Activated CD4-positive, alpha-beta T cell treated with anti-CD3 and anti-CD28 coated beads for 36 hours (primary cell): ENCODE measurements at regions of chr2 and their contacts with region 1.

Region 1: DNA sequence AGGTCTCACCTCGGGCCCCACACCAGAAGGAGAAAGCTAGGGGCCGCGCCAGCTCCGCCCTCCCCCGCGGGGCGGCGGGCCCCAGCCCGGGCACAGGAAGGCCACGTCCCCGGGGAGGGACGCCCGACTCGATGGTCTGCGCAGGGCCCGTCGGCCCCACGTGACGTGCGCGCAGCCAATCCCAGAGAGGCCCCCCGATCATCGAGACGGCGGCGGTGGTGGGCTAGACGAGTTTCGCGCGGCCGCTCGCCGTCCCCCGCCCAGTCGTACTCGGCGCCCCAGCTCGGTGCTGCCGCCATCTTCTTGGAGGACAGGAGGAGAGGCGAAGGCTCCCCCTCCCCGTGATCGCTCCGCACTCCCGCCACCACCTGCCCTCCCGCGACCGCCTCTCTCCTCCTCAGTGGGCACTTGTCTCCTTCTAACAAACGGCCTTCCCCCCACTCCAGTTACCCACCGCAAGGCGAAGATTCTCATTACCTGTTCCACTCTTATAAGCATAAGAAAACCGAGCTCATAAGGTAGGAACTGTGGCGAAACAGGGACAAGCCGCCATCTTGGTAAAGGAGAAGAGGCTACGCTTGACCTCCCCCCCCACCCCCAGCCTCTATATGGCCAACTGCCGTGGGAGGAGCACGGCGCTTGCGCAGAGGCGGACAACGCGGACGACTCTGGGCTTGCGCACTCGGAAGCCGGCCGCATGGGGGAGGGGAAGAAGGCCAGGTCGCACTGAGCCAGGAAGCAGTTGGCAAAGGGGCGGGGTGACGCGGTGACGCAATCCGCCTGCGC is at the start of gene HDLBP:
- DNase-seq: peak; percentile 100
- ATAC-seq: peak; percentile 84
- H3K4me3 Mint-ChIP-seq: peak within 1 kb of the TSS; percentile 100
- H3K27ac Mint-ChIP-seq: peak within 1 kb of the TSS; percentile 100
- H3K4me1 Mint-ChIP-seq: peaks cover 70% of the 10 kb centered on the region
- H3K27me3 Mint-ChIP-seq: no peaks in the 10 kb centered on the region
- total RNA-seq, gene HDLBP: 259 to 348 TPM

Region 2: DNA sequence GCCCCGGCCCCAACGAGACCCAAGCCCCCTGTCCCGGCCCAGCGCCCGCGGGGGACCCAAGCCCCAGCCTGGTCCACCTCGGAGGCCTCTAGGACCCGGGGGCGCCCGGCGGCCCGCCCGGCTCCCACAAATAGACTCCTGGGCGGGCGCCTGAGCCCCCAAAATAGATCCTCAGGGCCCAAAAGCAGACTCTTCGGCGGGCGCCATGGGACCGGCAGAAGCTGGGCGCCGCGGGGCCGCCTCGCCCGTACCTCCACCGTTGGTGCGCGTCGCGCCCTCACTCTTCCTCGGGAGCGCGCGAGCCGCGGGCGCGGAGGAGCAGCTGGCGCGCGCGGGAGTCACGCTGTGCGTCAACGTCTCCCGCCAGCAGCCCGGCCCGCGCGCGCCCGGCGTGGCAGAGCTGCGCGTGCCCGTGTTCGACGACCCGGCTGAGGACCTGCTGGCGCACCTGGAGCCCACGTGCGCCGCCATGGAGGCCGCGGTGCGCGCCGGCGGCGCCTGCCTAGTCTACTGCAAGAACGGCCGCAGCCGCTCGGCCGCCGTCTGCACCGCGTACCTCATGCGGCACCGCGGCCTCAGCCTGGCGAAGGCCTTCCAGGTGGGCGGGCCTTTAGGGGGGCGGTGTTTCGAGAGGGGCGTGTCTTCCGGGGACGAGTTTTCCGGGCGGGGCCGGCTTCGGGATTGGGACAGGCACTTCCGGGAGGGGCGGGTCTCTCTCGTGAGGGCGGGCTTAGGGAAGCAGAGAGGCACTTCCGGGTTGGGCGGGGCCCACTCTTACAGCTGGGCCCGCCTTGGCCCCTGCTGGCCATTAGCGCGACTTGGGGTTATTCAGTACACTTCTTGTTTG is 754.6 kb before region 1 on chr2:
- CTCF ChIA-PET with region 1: no interaction called
- POLR2A ChIA-PET with region 1: no interaction called
- intact Hi-C with region 1: loop called (anchors 1 to 5 kb)
- DNase-seq: peak; percentile 100
- ATAC-seq: peak; percentile 60
- H3K4me3 Mint-ChIP-seq: peak overlapping the region; percentile 82
- H3K27ac Mint-ChIP-seq: peak overlapping the region; percentile 89
- H3K4me1 Mint-ChIP-seq: peaks cover 76% of the 10 kb centered on the region
- H3K27me3 Mint-ChIP-seq: no peaks in the 10 kb centered on the region

Region 3: GRCh38 chr2:240655931-240656886 is 659.1 kb before region 1 on chr2:
- CTCF ChIA-PET with region 1: no interaction called
- POLR2A ChIA-PET with region 1: no interaction called
- intact Hi-C with region 1: no loop called
- DNase-seq: no peak
- ATAC-seq: peak; percentile 47
- H3K4me3 Mint-ChIP-seq: no peak overlapping the region
- H3K27ac Mint-ChIP-seq: no peak overlapping the region
- H3K4me1 Mint-ChIP-seq: peaks cover 6% of the 10 kb centered on the region
- H3K27me3 Mint-ChIP-seq: peaks cover 28% of the 10 kb centered on the region

Region 4: GRCh38 chr2:240868286-240869108 is 446.8 kb before region 1 on chr2 and contains the start of gene AGXT:
- CTCF ChIA-PET with region 1: no interaction called
- POLR2A ChIA-PET with region 1: no interaction called
- intact Hi-C with region 1: no loop called
- DNase-seq: no peak
- ATAC-seq: no peak
- H3K4me3 Mint-ChIP-seq: no peak within 1 kb of the TSS
- H3K27ac Mint-ChIP-seq: no peak within 1 kb of the TSS
- H3K4me1 Mint-ChIP-seq: no peaks in the 10 kb centered on the region
- H3K27me3 Mint-ChIP-seq: no peaks in the 10 kb centered on the region
- total RNA-seq, gene AGXT: not detected

Region 5: DNA sequence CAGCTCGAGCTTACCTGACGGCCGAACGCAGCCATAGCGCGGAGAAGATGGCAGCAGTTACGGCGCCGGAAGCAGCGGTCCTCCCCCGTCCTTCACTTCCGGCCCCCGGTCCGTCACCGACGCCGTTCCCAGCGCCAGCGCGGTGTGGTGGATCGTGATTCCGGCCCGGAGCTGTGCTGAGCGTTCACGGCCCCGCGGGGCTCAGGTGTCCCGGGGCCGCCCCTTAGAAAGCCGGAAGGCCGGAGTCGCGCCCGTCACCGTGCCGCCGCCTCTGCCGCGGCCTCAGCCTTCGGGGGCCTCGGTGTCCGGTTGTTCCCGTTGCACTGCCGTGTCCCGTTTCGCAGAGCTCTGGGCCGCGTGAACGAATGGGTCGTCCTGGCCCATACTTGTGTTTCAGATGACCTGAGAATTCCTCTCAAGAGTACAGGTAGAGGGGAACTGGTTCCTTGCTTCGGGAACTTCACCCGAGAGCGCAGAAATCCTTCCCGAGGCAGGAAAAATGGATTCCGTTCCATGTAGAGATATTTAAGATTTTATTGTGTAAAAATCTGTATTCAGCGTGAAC is 213.0 kb before region 1 on chr2 and contains the start of gene MTERF4:
- CTCF ChIA-PET with region 1: no interaction called
- POLR2A ChIA-PET with region 1: no interaction called
- intact Hi-C with region 1: loop called (anchors 1 to 10 kb)
- DNase-seq: peak; percentile 94
- ATAC-seq: peak; percentile 97
- H3K4me3 Mint-ChIP-seq: peak within 1 kb of the TSS; percentile 98
- H3K27ac Mint-ChIP-seq: peak within 1 kb of the TSS; percentile 99
- H3K4me1 Mint-ChIP-seq: peaks cover 48% of the 10 kb centered on the region
- H3K27me3 Mint-ChIP-seq: no peaks in the 10 kb centered on the region
- total RNA-seq, gene MTERF4: 34.4 to 34.5 TPM

Region 6: GRCh38 chr2:241302083-241302482 is 13.2 kb before region 1 on chr2:
- CTCF ChIA-PET with region 1: interaction called, 6 read pairs
- POLR2A ChIA-PET with region 1: interaction called, 10 read pairs
- intact Hi-C with region 1: no loop called
- DNase-seq: no peak
- ATAC-seq: no peak
- H3K4me3 Mint-ChIP-seq: no peak overlapping the region
- H3K27ac Mint-ChIP-seq: no peak overlapping the region
- H3K4me1 Mint-ChIP-seq: peaks cover 45% of the 10 kb centered on the region
- H3K27me3 Mint-ChIP-seq: no peaks in the 10 kb centered on the region

Region 7: DNA sequence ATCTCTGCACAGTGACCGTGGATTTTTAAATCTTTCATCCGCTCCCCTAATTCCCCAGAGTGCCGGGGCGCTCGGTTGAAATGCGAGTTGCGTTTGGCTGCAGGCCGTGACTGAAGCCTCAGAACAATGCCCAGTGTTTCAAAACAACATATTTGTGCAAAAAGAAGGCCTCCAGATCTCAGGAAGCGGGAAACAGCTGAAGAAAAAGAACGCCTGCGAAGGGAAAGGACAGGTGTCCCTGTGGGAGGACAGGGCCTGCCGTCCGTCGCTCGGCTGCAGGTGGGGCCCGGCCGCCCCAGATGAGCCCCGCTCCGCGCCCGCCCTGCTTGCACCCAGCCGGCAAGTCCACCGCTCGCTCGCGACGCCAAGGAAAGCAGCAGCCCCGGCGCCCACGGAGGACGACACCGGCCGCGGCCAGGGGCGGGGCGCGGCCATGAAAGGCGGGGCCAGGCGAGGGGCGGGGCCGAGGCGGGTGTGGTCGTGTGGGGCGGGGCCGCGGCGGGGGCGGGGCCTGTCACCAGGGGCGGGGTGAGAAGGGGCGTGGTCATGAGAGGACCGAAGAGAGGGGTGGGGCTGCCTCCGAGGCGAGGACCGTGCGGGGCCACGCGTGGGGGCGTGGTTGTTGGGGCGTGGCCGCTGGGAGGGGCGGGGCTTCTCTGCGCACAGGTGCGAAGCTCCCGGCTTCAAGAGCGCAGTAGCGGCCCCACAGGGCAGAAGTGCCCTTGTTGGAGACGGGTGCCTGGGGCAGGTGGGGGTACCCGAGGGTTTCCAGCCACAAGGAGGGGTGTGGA is 225.7 kb after region 1 on chr2:
- CTCF ChIA-PET with region 1: no interaction called
- POLR2A ChIA-PET with region 1: no interaction called
- intact Hi-C with region 1: loop called in 1 of 2 experiments (anchors 1 kb)
- DNase-seq: peak; percentile 90
- ATAC-seq: peak; percentile 92
- H3K4me3 Mint-ChIP-seq: peak overlapping the region; percentile 31
- H3K27ac Mint-ChIP-seq: no peak overlapping the region
- H3K4me1 Mint-ChIP-seq: peaks cover 4% of the 10 kb centered on the region
- H3K27me3 Mint-ChIP-seq: peaks cover 14% of the 10 kb centered on the region

Region 8: DNA sequence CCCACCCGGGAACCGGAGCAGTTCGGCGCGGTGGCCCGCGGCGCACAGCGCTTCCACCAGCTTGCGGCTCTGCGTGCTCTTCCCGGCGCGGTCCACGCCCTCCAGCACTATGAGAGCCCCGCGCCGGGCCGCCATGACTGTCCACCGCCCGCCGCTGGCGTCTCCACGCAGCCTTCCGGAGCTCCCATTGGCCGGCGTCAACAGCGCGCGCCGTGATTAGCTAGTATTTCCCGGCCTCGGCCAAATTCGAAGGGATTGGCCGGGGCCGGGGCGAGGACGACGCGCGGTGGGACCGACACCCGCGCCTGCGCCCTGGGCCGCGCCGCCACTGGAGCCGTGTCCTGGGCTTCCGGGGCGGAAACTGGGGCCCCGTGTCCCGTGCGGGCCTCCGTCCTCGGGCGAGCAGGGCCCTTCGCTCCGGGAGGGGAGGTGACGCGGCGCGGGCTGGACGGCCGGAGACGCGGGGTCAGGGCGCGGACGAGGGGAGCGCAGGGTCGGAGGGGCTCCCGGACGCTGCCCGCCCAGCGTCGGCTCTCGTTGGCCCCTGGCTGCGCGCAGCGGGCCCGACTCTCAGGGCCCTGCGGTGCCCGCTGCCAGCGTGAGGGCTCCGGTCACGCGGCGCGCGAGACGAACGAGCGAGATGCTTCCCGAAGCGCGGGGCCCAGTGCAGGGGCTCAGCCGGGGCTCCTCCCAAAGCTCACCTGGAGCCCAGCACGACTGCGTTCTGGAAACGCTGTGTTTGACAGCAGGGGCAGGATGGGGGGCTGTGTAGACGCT is 371.6 kb after region 1 on chr2 and contains the start of gene DTYMK:
- CTCF ChIA-PET with region 1: interaction called, 3 read pairs
- POLR2A ChIA-PET with region 1: interaction called, 5 read pairs
- intact Hi-C with region 1: loop called (anchors 1 to 10 kb)
- DNase-seq: peak; percentile 98
- ATAC-seq: peak; percentile 96
- H3K4me3 Mint-ChIP-seq: peak within 1 kb of the TSS; percentile 98
- H3K27ac Mint-ChIP-seq: peak within 1 kb of the TSS; percentile 96
- H3K4me1 Mint-ChIP-seq: peaks cover 32% of the 10 kb centered on the region
- H3K27me3 Mint-ChIP-seq: no peaks in the 10 kb centered on the region
- total RNA-seq, gene DTYMK: 79.8 to 93.1 TPM

Region 9: GRCh38 chr2:242088471-242089212 is 773.4 kb after region 1 on chr2:
- CTCF ChIA-PET with region 1: no interaction called
- POLR2A ChIA-PET with region 1: no interaction called
- intact Hi-C with region 1: loop called in 1 of 2 experiments (anchors 5 kb)
- DNase-seq: peak; percentile 95
- ATAC-seq: peak; percentile 96
- H3K4me3 Mint-ChIP-seq: peak overlapping the region; percentile 82
- H3K27ac Mint-ChIP-seq: peak overlapping the region; percentile 55
- H3K4me1 Mint-ChIP-seq: peaks cover 37% of the 10 kb centered on the region
- H3K27me3 Mint-ChIP-seq: peaks cover 3% of the 10 kb centered on the region